ENCODE measurements at regions of chr2 and their contacts with region 1.

Region 1: GRCh38 chr2:20617892-20618467 is 32.9 kb downstream of the HS1BP3 start:
- DNase-seq: no peak
- ATAC-seq: peak; percentile 11; the same call in 1 of the 2 replicates
- H3K4me3 Mint-ChIP-seq: no peak overlapping the region
- H3K27ac Mint-ChIP-seq: peak overlapping the region; percentile 72; the same call in 1 of the 2 replicates
- H3K4me1 Mint-ChIP-seq: peaks cover 31% of the 10 kb centered on the region
- H3K27me3 Mint-ChIP-seq: no peaks in the 10 kb centered on the region
- CTCF ChIP-seq: no peak

Region 2: GRCh38 chr2:20424300-20425290 is 193.4 kb before region 1 on chr2:
- CTCF ChIA-PET with region 1: interaction called, 11 read pairs
- POLR2A ChIA-PET with region 1: no interaction called
- DNase-seq: no peak
- ATAC-seq: no peak
- H3K4me3 Mint-ChIP-seq: no peak overlapping the region
- H3K27ac Mint-ChIP-seq: no peak overlapping the region
- H3K4me1 Mint-ChIP-seq: peaks cover 9% of the 10 kb centered on the region
- H3K27me3 Mint-ChIP-seq: no peaks in the 10 kb centered on the region
- CTCF ChIP-seq: no peak

Region 3: GRCh38 chr2:20604951-20605381 is 13.0 kb before region 1 on chr2:
- CTCF ChIA-PET with region 1: interaction called, 10 read pairs
- POLR2A ChIA-PET with region 1: no interaction called
- DNase-seq: no peak
- ATAC-seq: no peak
- H3K4me3 Mint-ChIP-seq: no peak overlapping the region
- H3K27ac Mint-ChIP-seq: no peak overlapping the region
- H3K4me1 Mint-ChIP-seq: peaks cover 3% of the 10 kb centered on the region; the same call in 1 of the 2 replicates
- H3K27me3 Mint-ChIP-seq: no peaks in the 10 kb centered on the region
- CTCF ChIP-seq: no peak

Region 4: DNA sequence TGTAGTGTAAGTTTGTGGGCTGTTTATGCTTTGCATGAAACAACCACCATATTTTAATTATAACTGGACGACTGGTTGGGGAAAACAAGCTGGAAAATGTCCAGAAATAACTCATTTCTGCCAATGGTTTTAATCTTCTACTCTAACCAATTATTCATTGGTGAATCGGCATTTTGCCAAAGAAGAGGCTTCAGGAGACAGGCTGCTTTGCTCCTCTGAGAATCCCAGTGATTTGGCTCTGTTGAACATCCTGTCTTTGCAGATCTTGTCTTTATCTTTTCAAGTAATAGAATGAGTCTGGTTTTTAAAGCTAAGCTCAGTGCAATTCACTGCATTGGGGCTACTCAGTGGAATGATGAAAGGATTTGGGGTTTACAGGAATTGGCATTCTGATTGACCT is 316.3 kb after region 1 on chr2:
- CTCF ChIA-PET with region 1: no interaction called
- POLR2A ChIA-PET with region 1: no interaction called
- DNase-seq: no peak
- ATAC-seq: no peak
- H3K4me3 Mint-ChIP-seq: no peak overlapping the region
- H3K27ac Mint-ChIP-seq: no peak overlapping the region
- H3K4me1 Mint-ChIP-seq: no peaks in the 10 kb centered on the region
- H3K27me3 Mint-ChIP-seq: peaks cover 6% of the 10 kb centered on the region
- CTCF ChIP-seq: no peak